ENCODE measurements at regions of chr9 and their contacts with region 1.

Region 1: DNA sequence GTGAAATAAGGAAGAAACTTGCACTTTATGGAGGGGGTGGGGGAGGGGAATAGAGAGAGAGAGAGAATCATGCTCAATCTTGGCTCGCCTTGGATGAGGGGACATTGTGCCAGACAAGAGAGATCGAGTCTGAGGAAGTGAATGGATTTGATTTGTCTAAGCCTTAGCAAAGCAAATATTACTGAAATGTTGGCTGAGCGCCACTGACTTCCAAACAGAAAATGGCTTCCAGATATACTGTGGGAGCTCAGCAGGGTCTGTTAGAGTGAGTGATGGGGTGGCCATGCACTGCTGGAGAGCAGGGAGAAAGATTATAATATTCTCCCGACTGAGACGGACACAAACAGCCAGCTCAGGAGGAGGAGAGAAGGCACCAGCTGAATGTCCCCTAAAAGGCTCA is 34.5 kb downstream of the BRINP1 start:
- DNase-seq: no peak
- H3K4me3 ChIP-seq: no peak overlapping the region
- H3K27ac ChIP-seq: peak overlapping the region; percentile 54 to 74
- H3K4me1 ChIP-seq: no peaks in the 10 kb centered on the region
- H3K27me3 ChIP-seq: no peaks in the 10 kb centered on the region
- CTCF ChIP-seq: no peak
- POLR2A ChIP-seq: no peak

Region 2: GRCh38 chr9:119213471-119213870 is 121.3 kb before region 1 on chr9:
- intact Hi-C with region 1: loop called (anchors 5 kb)
- DNase-seq: no peak
- H3K4me3 ChIP-seq: no peak overlapping the region
- H3K27ac ChIP-seq: no peak overlapping the region
- H3K4me1 ChIP-seq: no peaks in the 10 kb centered on the region
- H3K27me3 ChIP-seq: no peaks in the 10 kb centered on the region
- CTCF ChIP-seq: no peak
- POLR2A ChIP-seq: no peak

Region 3: GRCh38 chr9:119322184-119322583 is 12.6 kb before region 1 on chr9:
- intact Hi-C with region 1: no loop called
- DNase-seq: no peak
- H3K4me3 ChIP-seq: no peak overlapping the region
- H3K27ac ChIP-seq: no peak overlapping the region
- H3K4me1 ChIP-seq: no peaks in the 10 kb centered on the region
- H3K27me3 ChIP-seq: no peaks in the 10 kb centered on the region
- CTCF ChIP-seq: no peak
- POLR2A ChIP-seq: no peak

Measured in breast epithelium (tissue), 4 donors.